AG04450 (cell line): ENCODE measurements at regions of chr2 and their contacts with region 1.

Region 1: GRCh38 chr2:147989809-147990403 is 30.6 kb downstream of the ORC4 start:
- DNase-seq: peak; percentile 27
- H3K4me3 ChIP-seq: no peak overlapping the region
- H3K27ac ChIP-seq: no peak overlapping the region
- H3K27me3 ChIP-seq: no peaks in the 10 kb centered on the region
- CTCF ChIP-seq: peak; percentile 77

Region 2: DNA sequence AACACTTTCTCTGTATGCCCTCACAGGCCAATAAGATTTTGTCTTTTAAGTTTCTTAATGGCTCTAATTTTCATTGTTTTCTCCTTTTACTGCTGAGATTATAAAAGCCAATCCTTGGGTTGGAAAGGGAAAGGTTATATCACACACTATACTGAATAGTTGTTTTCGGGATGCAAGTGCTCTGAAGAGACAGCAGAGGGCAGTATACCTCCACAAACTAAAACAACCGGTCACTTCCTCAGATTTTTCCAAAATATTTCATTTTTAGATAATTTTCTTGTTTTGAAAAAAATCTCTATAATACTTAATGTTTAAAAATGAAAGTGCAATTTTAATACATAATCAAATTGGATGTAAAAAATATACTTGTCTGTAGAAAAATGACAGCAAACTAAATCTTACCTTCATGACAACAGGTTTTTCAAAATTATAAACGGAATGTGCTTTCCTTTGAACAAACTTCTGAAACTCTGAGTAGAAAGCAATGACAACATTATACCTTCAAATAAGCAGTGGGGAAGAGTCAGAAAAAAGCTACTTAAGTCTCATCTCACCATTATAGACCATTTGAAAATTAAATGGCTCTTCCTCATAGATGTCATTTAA is 52.1 kb before region 1 on chr2:
- CTCF ChIA-PET with region 1: interaction called, 10 read pairs
- POLR2A ChIA-PET with region 1: no interaction called
- DNase-seq: no peak
- H3K4me3 ChIP-seq: no peak overlapping the region
- H3K27ac ChIP-seq: no peak overlapping the region
- H3K27me3 ChIP-seq: no peaks in the 10 kb centered on the region
- CTCF ChIP-seq: peak; percentile 91

Region 3: GRCh38 chr2:148201075-148202004 is 211.4 kb after region 1 on chr2:
- CTCF ChIA-PET with region 1: interaction called, 10 read pairs
- POLR2A ChIA-PET with region 1: no interaction called
- DNase-seq: no peak
- H3K4me3 ChIP-seq: no peak overlapping the region
- H3K27ac ChIP-seq: no peak overlapping the region
- H3K27me3 ChIP-seq: no peaks in the 10 kb centered on the region
- CTCF ChIP-seq: peak; percentile 40

Region 4: DNA sequence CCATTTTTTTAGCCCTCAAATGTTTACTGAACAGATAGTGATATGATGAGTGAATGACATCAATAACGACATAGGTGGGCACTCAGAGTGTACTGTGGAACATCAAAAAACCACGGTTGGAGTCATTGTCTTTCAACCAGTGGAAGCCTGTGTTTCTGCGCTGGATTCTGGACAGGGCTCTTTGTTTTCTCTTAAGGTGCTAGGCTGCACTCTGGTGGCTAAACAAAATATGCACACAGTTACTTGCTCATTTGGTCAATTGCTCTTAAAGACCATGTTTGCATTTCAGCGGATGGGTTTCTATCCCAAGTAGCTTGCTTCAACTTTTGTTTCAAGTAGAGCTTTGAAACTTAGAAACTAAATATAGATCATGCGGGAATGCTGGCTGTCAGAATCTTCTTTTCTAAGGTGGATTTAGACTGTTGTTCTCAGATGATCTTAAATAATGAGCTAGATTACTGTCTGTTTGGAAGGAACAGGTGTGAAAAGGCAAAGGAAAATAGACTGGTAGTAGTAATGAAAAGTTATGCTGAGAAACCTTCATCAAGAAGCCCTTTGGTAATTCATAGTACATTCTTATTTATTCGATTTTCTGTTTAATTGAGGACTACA is 1000.1 kb after region 1 on chr2:
- CTCF ChIA-PET with region 1: interaction called, 14 read pairs
- POLR2A ChIA-PET with region 1: no interaction called
- DNase-seq: peak; percentile 44
- H3K4me3 ChIP-seq: no peak overlapping the region
- H3K27ac ChIP-seq: no peak overlapping the region
- H3K27me3 ChIP-seq: peaks cover 5% of the 10 kb centered on the region
- CTCF ChIP-seq: peak; percentile 75